ENCODE measurements at regions of chr2 and their contacts with region 1.

Region 1: DNA sequence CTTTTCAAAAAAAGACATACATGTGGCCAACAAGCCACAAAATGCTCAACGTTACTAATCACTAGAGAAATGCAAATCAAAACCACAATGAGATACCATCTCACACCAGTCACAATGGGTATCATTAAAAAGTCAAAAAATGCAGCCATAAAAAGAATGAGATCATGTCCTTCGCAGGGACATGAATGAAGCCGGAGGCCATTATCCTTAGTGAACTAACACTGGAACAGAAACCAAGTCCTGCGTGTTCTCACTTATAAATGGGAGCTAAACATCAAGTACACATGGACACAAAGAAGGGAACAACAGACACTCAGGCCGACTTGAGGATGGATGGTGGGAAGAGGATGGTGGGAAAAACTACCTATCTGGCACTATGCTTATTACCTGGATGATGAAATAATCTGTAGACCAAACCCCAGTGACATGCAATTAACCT is 17.8 kb upstream of the ATL2 start:
- DNase-seq: peak; percentile 98
- H3K4me3 ChIP-seq: no peak overlapping the region
- H3K27ac ChIP-seq: peak overlapping the region; percentile 97
- H3K4me1 ChIP-seq: peaks cover 40% of the 10 kb centered on the region
- H3K27me3 ChIP-seq: no peaks in the 10 kb centered on the region
- CTCF ChIP-seq: no peak

Region 2: GRCh38 chr2:38417745-38418689 is 23.1 kb after region 1 on chr2:
- CTCF ChIA-PET with region 1: no interaction called
- dilution Hi-C with region 1: no loop called
- in situ Hi-C with region 1: no loop called
- intact Hi-C with region 1: loop called (anchors 1 kb)
- DNase-seq: peak; percentile 81
- H3K4me3 ChIP-seq: no peak overlapping the region
- H3K27ac ChIP-seq: peak overlapping the region; percentile 39
- H3K4me1 ChIP-seq: peaks cover 38% of the 10 kb centered on the region
- H3K27me3 ChIP-seq: no peaks in the 10 kb centered on the region
- CTCF ChIP-seq: no peak

Region 3: DNA sequence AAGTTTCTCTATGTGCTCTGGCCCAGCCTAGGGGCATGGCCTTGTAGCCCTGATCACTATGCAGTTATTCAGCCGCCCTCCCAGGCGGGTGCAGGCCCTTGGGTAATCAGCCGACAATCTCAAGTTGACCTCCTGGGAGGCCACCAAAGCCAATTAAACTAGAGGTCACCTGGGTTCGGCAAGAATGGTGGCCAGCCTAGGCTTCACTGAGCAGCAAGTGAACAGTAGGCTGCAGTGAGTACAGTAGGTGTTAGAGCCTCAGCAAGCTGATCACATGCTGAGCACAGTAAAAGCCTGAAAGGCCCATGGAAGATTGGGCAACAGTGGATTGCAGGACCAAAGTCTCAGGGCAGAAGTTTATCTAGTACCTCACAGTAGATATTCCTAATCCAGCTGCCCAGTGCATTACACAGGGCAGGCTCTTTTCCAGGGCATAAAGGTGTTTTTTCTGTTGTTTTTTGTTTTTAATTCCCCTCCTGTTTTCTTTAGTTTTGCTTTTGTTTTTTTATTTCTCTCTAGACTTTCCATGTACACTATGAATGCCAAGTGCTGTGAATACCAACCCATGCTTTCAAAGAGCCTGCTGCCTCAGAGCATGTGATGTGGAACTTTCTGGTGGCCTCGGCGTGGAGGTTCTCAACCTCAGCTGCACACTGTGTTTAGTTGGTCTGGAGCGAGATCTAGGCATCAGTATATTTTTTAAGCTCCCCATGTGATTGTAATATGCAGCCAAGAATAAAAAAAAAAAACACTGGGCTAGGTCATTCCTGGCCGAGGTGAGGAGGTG is 38.1 kb after region 1 on chr2:
- CTCF ChIA-PET with region 1: no interaction called
- dilution Hi-C with region 1: no loop called
- in situ Hi-C with region 1: no loop called
- intact Hi-C with region 1: loop called (anchors 1 kb)
- DNase-seq: peak; percentile 35
- H3K4me3 ChIP-seq: no peak overlapping the region
- H3K27ac ChIP-seq: no peak overlapping the region
- H3K4me1 ChIP-seq: peaks cover 42% of the 10 kb centered on the region
- H3K27me3 ChIP-seq: no peaks in the 10 kb centered on the region
- CTCF ChIP-seq: no peak

Region 4: DNA sequence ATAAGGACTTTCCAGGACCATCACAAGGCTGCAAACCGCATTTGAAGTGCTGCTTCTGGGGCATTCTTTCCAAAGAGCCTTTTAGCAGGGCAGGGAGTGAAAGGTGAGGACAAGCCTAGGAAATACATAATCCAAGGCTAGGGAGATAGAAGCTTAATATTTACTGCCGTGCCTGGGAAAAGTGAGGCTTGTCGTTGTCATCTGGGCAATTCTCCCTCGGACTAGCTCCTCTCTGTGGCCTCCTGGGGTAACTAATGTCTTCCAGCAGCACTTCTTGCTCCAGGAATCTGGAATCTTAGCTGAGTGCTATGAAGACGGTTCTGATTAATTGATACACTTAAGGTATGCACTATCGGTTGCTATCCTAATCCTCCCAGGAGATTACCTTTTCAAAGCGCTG is 51.5 kb after region 1 on chr2:
- CTCF ChIA-PET with region 1: no interaction called
- dilution Hi-C with region 1: no loop called
- in situ Hi-C with region 1: no loop called
- intact Hi-C with region 1: loop called (anchors 5 kb)
- DNase-seq: no peak
- H3K4me3 ChIP-seq: peak overlapping the region in 1 of 3 experiments; percentile 28
- H3K27ac ChIP-seq: peak overlapping the region; percentile 51
- H3K4me1 ChIP-seq: peaks cover 63% of the 10 kb centered on the region
- H3K27me3 ChIP-seq: no peaks in the 10 kb centered on the region
- CTCF ChIP-seq: peak in 1 of 2 donors; percentile 42

Region 5: DNA sequence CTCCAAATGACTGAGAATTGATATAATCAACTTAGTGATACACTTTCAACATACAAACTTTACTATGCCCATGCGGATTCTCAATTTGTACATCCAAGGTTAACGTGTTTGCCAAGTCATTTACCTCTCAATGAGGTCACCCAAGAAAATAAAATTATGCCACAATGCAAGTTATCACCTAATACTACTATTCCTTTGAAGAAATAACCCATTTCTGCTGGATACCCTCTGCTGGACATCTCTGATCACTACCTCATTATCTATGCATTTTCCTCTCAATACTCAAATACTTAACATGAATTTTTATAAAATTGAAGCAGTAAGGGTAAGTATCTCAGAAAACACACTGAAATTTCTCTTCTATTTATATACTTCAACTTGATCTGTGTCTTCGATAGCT is 195.1 kb after region 1 on chr2:
- CTCF ChIA-PET with region 1: no interaction called
- dilution Hi-C with region 1: no loop called
- in situ Hi-C with region 1: no loop called
- intact Hi-C with region 1: no loop called
- DNase-seq: no peak
- H3K4me3 ChIP-seq: no peak overlapping the region
- H3K27ac ChIP-seq: no peak overlapping the region
- H3K4me1 ChIP-seq: peaks cover 5% of the 10 kb centered on the region
- H3K27me3 ChIP-seq: no peaks in the 10 kb centered on the region
- CTCF ChIP-seq: peak in 1 of 2 donors; percentile 17